ENCODE measurements at regions of chr3 and their contacts with region 1.

Region 1: DNA sequence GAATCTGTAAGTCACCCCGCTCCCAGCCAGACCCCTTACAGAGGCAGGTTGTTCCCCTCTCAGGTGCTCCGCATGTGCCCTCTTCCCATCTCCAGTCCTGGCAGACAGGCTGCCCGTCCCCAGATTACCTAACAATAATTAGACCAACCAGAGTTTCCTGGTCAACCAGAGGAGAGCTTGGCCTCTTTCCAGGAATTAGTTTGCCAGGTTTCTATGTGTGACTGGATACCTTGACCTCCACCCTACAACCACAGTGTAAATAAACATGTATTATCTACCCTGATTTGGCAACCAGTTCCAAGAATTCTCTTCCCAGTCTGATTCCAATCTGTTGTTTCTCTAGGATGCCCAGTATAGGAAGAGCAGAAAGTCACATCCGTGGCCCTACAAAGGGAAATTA is 178.0 kb upstream of the UMPS start:
- DNase-seq: no peak
- H3K4me3 ChIP-seq: no peak overlapping the region
- H3K27ac ChIP-seq: no peak overlapping the region
- H3K4me1 ChIP-seq: peaks cover 5% of the 10 kb centered on the region
- H3K27me3 ChIP-seq: no peaks in the 10 kb centered on the region
- CTCF ChIP-seq: no peak

Region 2: DNA sequence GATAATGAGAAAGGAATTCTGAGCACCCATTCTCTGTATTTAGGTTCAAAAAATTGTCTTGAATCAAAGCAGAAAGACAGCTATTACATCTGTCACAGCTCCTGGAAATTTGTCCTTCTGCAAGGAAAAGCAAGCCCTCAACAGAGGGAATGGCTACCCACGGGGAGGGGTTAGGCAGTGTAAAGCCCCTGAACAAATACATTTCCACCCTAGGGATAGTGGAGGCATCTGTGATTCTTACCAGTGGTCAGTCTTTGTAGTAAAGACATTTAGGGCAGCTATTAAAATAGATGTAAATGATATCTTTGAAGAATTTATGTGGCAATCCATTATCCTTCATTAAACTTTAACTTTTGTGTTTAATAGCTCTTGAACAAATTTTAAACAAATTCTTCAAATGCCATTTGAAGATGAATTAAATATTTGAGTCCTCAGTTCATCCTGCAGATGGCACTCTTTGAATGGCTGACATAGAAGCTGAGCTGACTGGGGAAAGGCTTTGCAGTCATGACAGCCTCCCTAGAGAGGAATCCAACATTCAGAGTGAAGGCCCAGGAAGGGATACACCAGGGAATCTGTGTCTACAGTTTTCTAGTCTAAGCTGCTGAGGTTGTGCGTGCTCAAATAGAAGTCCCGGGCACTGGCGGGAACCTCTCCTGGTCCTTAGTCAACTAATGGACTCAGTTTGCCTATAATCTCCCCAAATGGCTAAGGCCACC is 200.7 kb before region 1 on chr3:
- CTCF ChIA-PET with region 1: interaction called, 3 read pairs
- POLR2A ChIA-PET with region 1: no interaction called
- intact Hi-C with region 1: loop called (anchors 1 kb)
- DNase-seq: peak; percentile 79
- H3K4me3 ChIP-seq: no peak overlapping the region
- H3K27ac ChIP-seq: no peak overlapping the region
- H3K4me1 ChIP-seq: no peaks in the 10 kb centered on the region
- H3K27me3 ChIP-seq: no peaks in the 10 kb centered on the region
- CTCF ChIP-seq: peak; percentile 79

Region 3: DNA sequence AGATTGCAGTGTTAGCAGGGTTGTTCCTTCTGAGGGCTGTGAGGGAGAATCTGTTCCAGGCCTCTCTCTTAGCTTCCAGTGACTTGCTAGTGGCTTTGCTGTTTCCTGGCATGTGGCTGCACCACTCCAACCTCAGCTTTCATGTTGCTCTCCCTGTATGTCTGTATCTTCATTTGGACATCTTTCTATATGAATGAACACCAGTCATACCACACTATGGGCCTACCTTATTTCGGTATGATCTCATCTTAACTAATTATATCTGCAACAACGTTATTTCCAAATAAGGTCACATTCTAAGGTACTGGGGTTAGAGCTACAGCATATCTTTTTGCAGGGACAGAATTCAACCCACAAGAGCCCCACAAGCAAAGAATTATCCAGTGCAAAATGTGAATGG is 178.7 kb before region 1 on chr3:
- CTCF ChIA-PET with region 1: no interaction called
- POLR2A ChIA-PET with region 1: no interaction called
- intact Hi-C with region 1: no loop called
- DNase-seq: no peak
- H3K4me3 ChIP-seq: no peak overlapping the region
- H3K27ac ChIP-seq: no peak overlapping the region
- H3K4me1 ChIP-seq: no peaks in the 10 kb centered on the region
- H3K27me3 ChIP-seq: no peaks in the 10 kb centered on the region
- CTCF ChIP-seq: no peak

Region 4: GRCh38 chr3:124467980-124468902 is 84.0 kb before region 1 on chr3:
- CTCF ChIA-PET with region 1: no interaction called
- POLR2A ChIA-PET with region 1: no interaction called
- intact Hi-C with region 1: loop called (anchors 5 kb)
- DNase-seq: peak; percentile 69
- H3K4me3 ChIP-seq: no peak overlapping the region
- H3K27ac ChIP-seq: no peak overlapping the region
- H3K4me1 ChIP-seq: no peaks in the 10 kb centered on the region
- H3K27me3 ChIP-seq: no peaks in the 10 kb centered on the region
- CTCF ChIP-seq: peak; percentile 99

Region 5: DNA sequence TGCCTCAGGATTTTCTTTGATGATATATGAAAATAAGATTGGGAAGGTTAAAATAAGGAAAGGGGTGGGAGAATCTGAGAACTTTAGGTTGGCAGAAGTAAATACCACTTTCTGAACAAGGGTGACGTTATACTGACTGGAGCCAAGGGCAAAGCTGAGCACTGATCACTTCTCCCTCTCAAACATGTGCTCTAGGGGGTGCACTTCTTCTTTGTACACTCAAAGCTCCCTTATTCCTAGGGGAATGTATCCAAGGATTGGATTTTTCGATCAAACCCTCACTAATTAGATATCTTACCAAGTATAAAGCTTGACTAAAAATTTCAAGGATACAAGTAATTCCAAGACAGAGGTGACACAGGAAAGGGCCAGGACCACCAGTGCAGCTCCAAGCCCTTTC is 65.9 kb before region 1 on chr3:
- CTCF ChIA-PET with region 1: no interaction called
- POLR2A ChIA-PET with region 1: no interaction called
- intact Hi-C with region 1: loop called (anchors 1 kb)
- DNase-seq: peak; percentile 41
- H3K4me3 ChIP-seq: no peak overlapping the region
- H3K27ac ChIP-seq: no peak overlapping the region
- H3K4me1 ChIP-seq: peaks cover 2% of the 10 kb centered on the region
- H3K27me3 ChIP-seq: no peaks in the 10 kb centered on the region
- CTCF ChIP-seq: peak; percentile 52

Measured in A673 (cell line).